Naive thymus-derived CD4-positive, alpha-beta T cell (primary cell): ENCODE measurements at regions of chr3 and their contacts with region 1.

Region 1: DNA sequence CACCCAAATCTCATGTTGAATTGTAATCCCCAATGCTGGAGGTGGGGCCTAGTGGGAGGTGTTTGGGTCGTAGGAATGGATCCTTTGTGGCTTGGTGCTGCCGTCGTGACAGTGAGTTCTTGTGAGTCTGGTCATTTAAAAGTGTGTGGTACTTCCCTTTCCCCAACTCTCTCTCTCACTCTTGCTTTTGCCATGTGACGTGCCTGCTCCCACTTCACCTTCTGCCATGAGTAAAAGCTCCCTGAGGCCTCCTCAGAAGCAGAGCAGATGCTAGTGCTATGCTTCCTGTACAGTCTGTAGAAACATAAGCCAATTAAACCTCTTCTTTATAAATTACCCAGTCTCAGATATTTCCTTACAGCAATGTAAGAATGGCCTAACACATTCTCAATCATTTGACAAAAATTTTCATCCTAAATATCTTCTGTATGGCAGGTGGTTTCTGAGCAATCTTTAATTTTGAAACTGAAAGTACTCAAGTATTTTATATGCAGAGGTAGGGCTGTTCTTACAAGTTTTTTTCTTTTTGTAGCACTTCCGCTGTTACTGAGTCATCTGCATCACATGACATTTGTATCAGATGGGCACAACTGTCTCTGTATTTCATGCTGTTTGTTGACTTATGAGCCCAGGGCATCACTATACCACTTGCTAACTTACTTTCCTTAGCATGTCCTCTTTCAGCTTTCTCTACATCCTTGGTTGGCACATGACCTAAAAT is 8.8 kb downstream of the RPL39L start:
- DNase-seq: peak in 7 of 9 donors; percentile 61 to 86 (median 81)
- ATAC-seq: peak; percentile 99
- H3K4me3 ChIP-seq: no peak overlapping the region
- H3K4me3 Mint-ChIP-seq: peak overlapping the region; percentile 43 to 86 (median 74)
- H3K27ac ChIP-seq: peak overlapping the region; percentile 68
- H3K27ac Mint-ChIP-seq: peak overlapping the region; percentile 95 to 99 (median 97)
- H3K4me1 ChIP-seq: peaks cover 19 to 22% of the 10 kb centered on the region in 2 donors
- H3K4me1 Mint-ChIP-seq: peaks cover 12 to 49% (median 25%) of the 10 kb centered on the region in 7 donors
- H3K27me3 ChIP-seq: no peaks in the 10 kb centered on the region
- H3K27me3 Mint-ChIP-seq: no peaks in the 10 kb centered on the region

Region 2: DNA sequence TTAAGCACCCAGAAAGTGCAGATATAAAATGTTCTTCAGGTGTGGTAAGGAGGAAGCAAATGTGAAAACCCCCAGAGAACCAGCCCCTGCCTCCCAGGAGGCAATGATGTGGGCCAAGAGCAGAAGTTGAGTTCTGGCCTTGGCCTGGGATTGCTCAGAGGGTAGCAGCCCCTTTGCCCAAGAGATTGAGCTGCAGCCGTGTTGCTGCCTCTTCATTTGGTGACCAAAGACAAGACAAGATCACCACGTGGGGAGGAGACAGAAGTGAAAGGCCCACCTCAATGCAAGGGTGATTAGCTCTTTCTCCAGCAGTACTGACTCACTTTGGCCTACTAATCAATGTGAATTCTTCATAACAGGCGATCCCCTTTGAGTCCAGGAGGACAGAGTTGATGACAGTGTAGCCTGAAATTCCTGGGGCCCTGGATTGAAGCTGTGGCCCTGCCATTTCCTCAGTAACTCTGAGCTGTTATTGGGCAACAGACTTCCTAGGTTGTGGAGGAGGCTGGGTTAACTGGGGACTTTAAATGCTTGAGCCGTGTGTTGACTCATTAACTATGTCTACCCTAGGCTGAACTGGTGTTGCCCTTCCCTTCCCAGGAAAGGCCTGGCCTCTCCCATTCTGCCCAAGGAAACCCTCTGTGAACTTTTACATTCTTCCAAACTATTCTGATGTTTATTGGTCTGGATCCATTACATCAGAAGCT is 113.7 kb before region 1 on chr3:
- CTCF ChIA-PET with region 1: no interaction called
- POLR2A ChIA-PET with region 1: no interaction called
- intact Hi-C with region 1: loop called in 1 of 2 experiments (anchors 1 kb)
- DNase-seq: no peak
- ATAC-seq: no peak
- H3K4me3 ChIP-seq: no peak overlapping the region
- H3K4me3 Mint-ChIP-seq: peak overlapping the region in 2 of 10 donors; percentile 14 to 74
- H3K27ac ChIP-seq: no peak overlapping the region
- H3K27ac Mint-ChIP-seq: peak overlapping the region in 8 of 9 donors; percentile 17 to 96 (median 72)
- H3K4me1 ChIP-seq: peaks cover 16 to 57% of the 10 kb centered on the region in 2 donors
- H3K4me1 Mint-ChIP-seq: peaks cover 53 to 90% (median 76%) of the 10 kb centered on the region in 7 donors
- H3K27me3 ChIP-seq: no peaks in the 10 kb centered on the region
- H3K27me3 Mint-ChIP-seq: no peaks in the 10 kb centered on the region

Region 3: GRCh38 chr3:187150599-187150998 is 20.1 kb after region 1 on chr3:
- CTCF ChIA-PET with region 1: interaction called, 14 read pairs
- POLR2A ChIA-PET with region 1: interaction called, 4 read pairs
- intact Hi-C with region 1: no loop called
- DNase-seq: peak; percentile 30 to 57 (median 43)
- ATAC-seq: peak; percentile 60
- H3K4me3 ChIP-seq: no peak overlapping the region
- H3K4me3 Mint-ChIP-seq: no peak overlapping the region
- H3K27ac ChIP-seq: no peak overlapping the region
- H3K27ac Mint-ChIP-seq: peak overlapping the region in 1 of 9 donors; percentile 38
- H3K4me1 ChIP-seq: no peaks in the 10 kb centered on the region
- H3K4me1 Mint-ChIP-seq: peaks cover 0 to 32% (median 10%) of the 10 kb centered on the region in 7 donors
- H3K27me3 ChIP-seq: no peaks in the 10 kb centered on the region
- H3K27me3 Mint-ChIP-seq: peaks cover 0 to 48% (median 0%) of the 10 kb centered on the region in 5 donors